CD8-positive, alpha-beta memory T cell (primary cell): ENCODE measurements at regions of chr14 and their contacts with region 1.

Region 1: DNA sequence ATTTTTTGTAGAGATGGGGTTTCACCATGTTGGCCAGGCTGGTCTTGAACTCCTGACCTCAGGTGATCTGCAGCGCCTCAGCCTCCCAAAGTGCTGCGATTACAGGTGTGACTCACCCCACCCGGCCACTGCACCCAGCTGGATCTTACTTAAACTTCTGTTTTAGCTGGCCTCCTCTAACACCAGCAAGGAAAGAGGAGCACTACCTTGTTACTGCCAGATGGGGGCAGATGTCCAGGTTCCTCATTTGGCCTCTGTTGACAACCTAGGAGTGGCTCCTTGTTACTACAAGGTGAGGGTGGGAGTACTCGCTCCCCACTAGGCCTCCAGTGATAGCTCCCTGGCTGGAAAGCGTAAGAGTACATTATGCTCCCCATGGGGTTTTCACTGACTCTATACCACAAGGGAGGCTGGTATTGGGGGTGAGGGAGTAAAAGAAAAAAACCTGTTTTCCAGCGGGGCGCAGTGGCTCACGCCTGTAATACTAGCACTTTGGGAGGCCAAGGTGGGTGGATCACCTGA is 13.1 kb upstream of the ARF6 start:
- DNase-seq: peak in 4 of 5 donors; percentile 34 to 72 (median 56)
- H3K4me3 ChIP-seq: no peak overlapping the region
- H3K4me3 Mint-ChIP-seq: no peak overlapping the region
- H3K27ac ChIP-seq: no peak overlapping the region
- H3K27ac Mint-ChIP-seq: peak overlapping the region in 6 of 8 donors; percentile 36 to 96 (median 62)
- H3K4me1 ChIP-seq: peaks cover 11% of the 10 kb centered on the region
- H3K4me1 Mint-ChIP-seq: peaks cover 3 to 12% (median 10%) of the 10 kb centered on the region in 3 donors
- H3K27me3 ChIP-seq: no peaks in the 10 kb centered on the region
- H3K27me3 Mint-ChIP-seq: no peaks in the 10 kb centered on the region

Region 2: GRCh38 chr14:49461529-49462401 is 418.0 kb before region 1 on chr14:
- CTCF ChIA-PET with region 1: no interaction called
- POLR2A ChIA-PET with region 1: no interaction called
- DNase-seq: peak; percentile 37 to 71 (median 57)
- H3K4me3 ChIP-seq: no peak overlapping the region
- H3K4me3 Mint-ChIP-seq: no peak overlapping the region
- H3K27ac ChIP-seq: no peak overlapping the region
- H3K27ac Mint-ChIP-seq: peak overlapping the region in 1 of 8 donors; percentile 21
- H3K4me1 ChIP-seq: no peaks in the 10 kb centered on the region
- H3K4me1 Mint-ChIP-seq: no peaks in the 10 kb centered on the region
- H3K27me3 ChIP-seq: no peaks in the 10 kb centered on the region
- H3K27me3 Mint-ChIP-seq: peaks cover 2 to 12% of the 10 kb centered on the region in 2 donors

Region 3: DNA sequence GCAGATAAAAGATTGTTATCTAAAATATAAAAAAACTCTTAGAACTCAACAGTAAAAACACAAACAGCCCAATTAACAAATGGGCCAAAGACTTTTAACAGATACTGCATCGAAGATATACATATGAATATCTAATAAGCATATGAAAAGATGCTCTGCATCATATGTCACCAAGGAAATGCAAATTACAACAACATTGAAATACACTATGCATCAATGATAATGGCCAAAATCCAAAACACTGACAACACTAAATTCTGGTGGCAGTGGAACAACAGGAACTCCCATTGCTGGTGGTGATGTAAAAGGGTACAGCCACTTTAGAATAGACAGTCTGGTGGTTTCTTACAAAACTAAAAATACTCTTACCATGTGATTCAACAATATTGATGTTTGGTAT is 71.0 kb before region 1 on chr14:
- CTCF ChIA-PET with region 1: no interaction called
- POLR2A ChIA-PET with region 1: no interaction called
- DNase-seq: no peak
- H3K4me3 ChIP-seq: no peak overlapping the region
- H3K4me3 Mint-ChIP-seq: no peak overlapping the region
- H3K27ac ChIP-seq: no peak overlapping the region
- H3K27ac Mint-ChIP-seq: peak overlapping the region in 2 of 8 donors; percentile 19 to 80
- H3K4me1 ChIP-seq: no peaks in the 10 kb centered on the region
- H3K4me1 Mint-ChIP-seq: peaks cover 11 to 21% (median 14%) of the 10 kb centered on the region in 3 donors
- H3K27me3 ChIP-seq: no peaks in the 10 kb centered on the region
- H3K27me3 Mint-ChIP-seq: no peaks in the 10 kb centered on the region

Region 4: DNA sequence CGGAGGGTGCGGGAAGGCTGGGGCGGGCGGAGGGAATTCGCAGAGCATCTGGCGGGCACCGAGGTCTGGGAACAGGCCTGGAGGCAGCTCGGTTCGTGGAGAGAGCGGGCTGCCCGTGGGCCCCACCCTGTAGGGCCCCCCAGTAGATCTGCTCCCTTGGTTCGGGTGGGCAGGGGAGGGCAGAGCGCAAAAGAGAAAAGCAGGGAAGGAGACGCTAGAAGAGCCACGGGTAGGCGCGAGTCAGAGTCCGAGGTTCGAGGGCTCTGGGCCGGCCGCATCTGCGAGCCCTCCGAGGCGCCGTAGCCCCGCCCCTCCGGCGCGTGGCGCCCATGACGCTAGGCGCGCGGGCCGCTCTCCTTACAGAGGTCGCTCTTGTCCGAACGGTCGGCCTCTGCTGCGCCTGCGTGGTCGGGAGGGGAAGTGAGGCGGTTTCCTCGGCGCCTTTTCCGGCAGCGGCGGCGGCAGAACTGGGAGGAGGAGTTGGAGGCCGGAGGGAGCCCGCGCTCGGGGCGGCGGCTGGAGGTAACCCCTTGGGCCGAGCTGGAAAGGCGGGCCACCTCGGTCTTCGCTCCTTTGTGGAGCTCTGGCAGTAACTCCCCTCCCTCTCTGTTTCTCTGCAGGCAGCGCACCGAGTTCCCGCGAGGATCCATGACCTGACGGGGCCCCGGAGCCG is 13.0 kb after region 1 on chr14 and contains the start of gene ARF6:
- CTCF ChIA-PET with region 1: interaction called, 12 read pairs
- POLR2A ChIA-PET with region 1: interaction called, 12 read pairs
- DNase-seq: peak; percentile 92 to 96 (median 94)
- H3K4me3 ChIP-seq: peak within 1 kb of the TSS; percentile 85
- H3K4me3 Mint-ChIP-seq: peak within 1 kb of the TSS; percentile 92 to 100 (median 99)
- H3K27ac ChIP-seq: peak within 1 kb of the TSS; percentile 97
- H3K27ac Mint-ChIP-seq: peak within 1 kb of the TSS; percentile 97 to 100 (median 99)
- H3K4me1 ChIP-seq: peaks cover 31% of the 10 kb centered on the region
- H3K4me1 Mint-ChIP-seq: peaks cover 30 to 44% (median 32%) of the 10 kb centered on the region in 3 donors
- H3K27me3 ChIP-seq: no peaks in the 10 kb centered on the region
- H3K27me3 Mint-ChIP-seq: peaks cover 0 to 1% of the 10 kb centered on the region in 2 donors
- total RNA-seq, gene ARF6: 168 TPM

Region 5: DNA sequence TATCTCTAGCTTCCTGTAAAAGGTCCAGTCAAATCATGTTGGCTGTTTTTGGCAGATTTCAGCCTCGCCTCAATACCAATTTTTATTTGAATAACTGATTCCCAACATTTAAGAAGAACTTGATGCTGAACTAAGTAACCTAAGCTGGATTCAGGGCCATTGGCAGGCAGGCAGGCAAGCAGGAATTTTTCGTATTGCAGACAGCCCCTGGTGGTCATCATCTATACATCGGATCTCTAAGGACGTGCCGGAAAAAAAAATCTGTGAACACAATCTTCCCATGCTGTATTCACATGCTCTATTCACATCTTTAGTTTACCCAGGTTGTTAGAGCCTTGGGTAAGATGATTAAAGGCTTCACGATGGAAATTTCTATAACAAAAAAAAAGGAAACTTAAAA is 229.6 kb after region 1 on chr14:
- CTCF ChIA-PET with region 1: interaction called, 22 read pairs
- POLR2A ChIA-PET with region 1: no interaction called
- DNase-seq: no peak
- H3K4me3 ChIP-seq: no peak overlapping the region
- H3K4me3 Mint-ChIP-seq: no peak overlapping the region
- H3K27ac ChIP-seq: no peak overlapping the region
- H3K27ac Mint-ChIP-seq: peak overlapping the region in 2 of 8 donors; percentile 17 to 40
- H3K4me1 ChIP-seq: peaks cover 8% of the 10 kb centered on the region
- H3K4me1 Mint-ChIP-seq: peaks cover 8 to 33% (median 22%) of the 10 kb centered on the region in 3 donors
- H3K27me3 ChIP-seq: no peaks in the 10 kb centered on the region
- H3K27me3 Mint-ChIP-seq: no peaks in the 10 kb centered on the region